ENCODE measurements at regions of chr2 and their contacts with region 1.

Region 1: GRCh38 chr2:236177967-236178899 is 10.0 kb upstream of the GBX2 start:
- DNase-seq: peak; percentile 91

Region 2: DNA sequence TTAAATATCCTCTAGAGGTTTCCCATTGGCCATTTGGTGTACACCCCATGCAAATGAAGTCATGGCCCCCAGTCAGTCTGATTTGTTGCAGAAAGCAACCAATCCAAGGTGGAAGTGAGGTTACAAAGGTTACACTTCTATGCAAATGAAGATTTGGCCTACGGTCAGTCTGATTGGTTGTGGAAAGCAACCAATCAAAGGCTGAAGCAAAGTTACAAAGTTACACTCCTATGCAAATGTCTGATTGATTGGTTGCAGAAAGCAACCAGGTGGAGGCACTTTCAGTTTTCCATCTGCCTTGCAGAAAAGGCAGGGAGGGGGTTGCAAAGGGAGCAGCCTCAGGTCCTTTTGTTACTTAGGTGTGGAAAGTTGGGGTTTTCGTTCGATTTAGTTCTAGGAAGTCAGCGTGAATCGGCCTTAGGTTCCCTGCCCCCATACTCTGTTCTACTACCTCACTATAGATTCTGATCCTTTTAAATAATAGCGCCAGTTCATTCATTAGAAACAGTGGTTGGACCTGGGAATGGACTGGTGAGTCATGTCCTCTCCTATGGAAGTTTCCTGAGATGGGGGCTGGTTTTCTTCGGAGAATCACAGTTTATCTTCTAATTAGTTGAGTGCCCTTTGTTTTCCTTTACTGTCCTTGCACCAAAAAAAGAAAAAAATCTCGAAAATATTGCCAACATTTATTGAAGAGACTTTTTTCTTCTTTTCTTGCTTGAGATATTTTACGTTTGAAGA is 404.9 kb before region 1 on chr2:
- intact Hi-C with region 1: loop called (anchors 2 to 5 kb)
- DNase-seq: no peak

Region 3: GRCh38 chr2:235779444-235779896 is 398.8 kb before region 1 on chr2:
- intact Hi-C with region 1: loop called (anchors 2 to 5 kb)
- DNase-seq: peak; percentile 89

Region 4: GRCh38 chr2:235940330-235940729 is 237.9 kb before region 1 on chr2:
- intact Hi-C with region 1: no loop called
- DNase-seq: peak; percentile 90

Region 5: GRCh38 chr2:236121546-236121945 is 56.7 kb before region 1 on chr2:
- intact Hi-C with region 1: no loop called
- DNase-seq: no peak

Region 6: DNA sequence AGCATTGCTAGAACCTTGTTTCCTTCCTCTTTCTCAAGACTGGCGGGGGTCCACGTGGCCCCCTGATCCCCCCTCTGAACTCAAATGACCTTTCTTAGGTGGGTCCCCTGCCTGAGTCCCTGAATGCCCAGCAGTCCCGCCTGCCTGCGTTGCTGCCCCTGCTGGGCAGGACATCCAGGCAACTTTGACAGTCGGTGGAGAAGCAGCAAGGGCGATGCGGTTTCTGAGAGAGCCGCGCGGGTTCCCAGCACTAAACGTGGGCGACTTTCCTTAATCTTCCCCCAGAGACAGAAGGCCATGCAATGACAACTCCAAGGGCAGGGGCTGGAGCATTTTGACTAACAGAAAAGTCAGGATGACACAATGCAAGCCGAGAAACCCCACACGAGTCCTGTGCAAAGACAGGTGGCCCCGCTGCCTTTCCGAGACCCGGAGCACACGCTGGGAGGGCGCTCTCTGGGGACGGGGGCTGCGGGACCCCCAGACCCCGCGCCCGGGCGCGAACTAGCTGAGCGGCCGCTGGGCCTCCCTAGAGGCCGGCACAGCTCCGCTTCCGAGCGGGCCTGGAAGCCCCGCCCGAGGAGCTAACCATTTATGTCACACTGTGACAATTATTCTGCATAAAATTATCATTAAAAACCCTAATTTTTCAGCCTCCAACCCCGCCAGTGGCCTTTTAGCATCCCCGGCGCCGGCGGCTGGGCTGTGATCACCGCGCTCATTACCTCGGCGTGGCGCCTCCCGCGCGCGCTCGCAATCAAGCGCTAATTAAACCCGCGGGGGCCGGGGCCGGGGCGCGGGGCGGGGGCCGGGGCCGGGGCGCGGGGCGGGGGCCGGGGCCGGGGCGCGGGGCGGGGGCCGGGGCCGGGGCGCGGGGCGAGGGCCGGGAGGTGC is 58.6 kb after region 1 on chr2:
- intact Hi-C with region 1: no loop called
- DNase-seq: no peak